Activated CD4-positive, alpha-beta T cell treated with anti-CD3 and anti-CD28 coated beads, Interleukin-2, amount 10 ng/mL, durations not matched to agents 24 days and 14 days (primary cell): ENCODE measurements at regions of chr4 and their contacts with region 1.

Region 1: GRCh38 chr4:242121-242848 is 63.0 kb downstream of the ZNF732 start:
- DNase-seq: peak; percentile 91
- H3K4me3 Mint-ChIP-seq: peak overlapping the region; percentile 82
- H3K27ac Mint-ChIP-seq: peak overlapping the region; percentile 63
- H3K4me1 Mint-ChIP-seq: peaks cover 8% of the 10 kb centered on the region
- H3K27me3 Mint-ChIP-seq: no peaks in the 10 kb centered on the region

Region 2: GRCh38 chr4:124275-125081 is 117.8 kb before region 1 on chr4 and contains the start of gene ZNF718:
- intact Hi-C with region 1: loop called (anchors 5 kb)
- DNase-seq: peak; percentile 97
- H3K4me3 Mint-ChIP-seq: peak within 1 kb of the TSS; percentile 100
- H3K27ac Mint-ChIP-seq: peak within 1 kb of the TSS; percentile 99
- H3K4me1 Mint-ChIP-seq: peaks cover 25% of the 10 kb centered on the region
- H3K27me3 Mint-ChIP-seq: no peaks in the 10 kb centered on the region
- total RNA-seq, gene ZNF718: 7.6 and 7.7 TPM in 2 replicates

Region 3: GRCh38 chr4:499577-499976 is 257.3 kb after region 1 on chr4:
- intact Hi-C with region 1: loop called (anchors 1 kb)
- DNase-seq: peak; percentile 69
- H3K4me3 Mint-ChIP-seq: peak overlapping the region; percentile 93
- H3K27ac Mint-ChIP-seq: peak overlapping the region; percentile 96
- H3K4me1 Mint-ChIP-seq: peaks cover 25% of the 10 kb centered on the region
- H3K27me3 Mint-ChIP-seq: no peaks in the 10 kb centered on the region